IMR-90 (cell line): ENCODE measurements at regions of chr2 and their contacts with region 1.

Region 1: DNA sequence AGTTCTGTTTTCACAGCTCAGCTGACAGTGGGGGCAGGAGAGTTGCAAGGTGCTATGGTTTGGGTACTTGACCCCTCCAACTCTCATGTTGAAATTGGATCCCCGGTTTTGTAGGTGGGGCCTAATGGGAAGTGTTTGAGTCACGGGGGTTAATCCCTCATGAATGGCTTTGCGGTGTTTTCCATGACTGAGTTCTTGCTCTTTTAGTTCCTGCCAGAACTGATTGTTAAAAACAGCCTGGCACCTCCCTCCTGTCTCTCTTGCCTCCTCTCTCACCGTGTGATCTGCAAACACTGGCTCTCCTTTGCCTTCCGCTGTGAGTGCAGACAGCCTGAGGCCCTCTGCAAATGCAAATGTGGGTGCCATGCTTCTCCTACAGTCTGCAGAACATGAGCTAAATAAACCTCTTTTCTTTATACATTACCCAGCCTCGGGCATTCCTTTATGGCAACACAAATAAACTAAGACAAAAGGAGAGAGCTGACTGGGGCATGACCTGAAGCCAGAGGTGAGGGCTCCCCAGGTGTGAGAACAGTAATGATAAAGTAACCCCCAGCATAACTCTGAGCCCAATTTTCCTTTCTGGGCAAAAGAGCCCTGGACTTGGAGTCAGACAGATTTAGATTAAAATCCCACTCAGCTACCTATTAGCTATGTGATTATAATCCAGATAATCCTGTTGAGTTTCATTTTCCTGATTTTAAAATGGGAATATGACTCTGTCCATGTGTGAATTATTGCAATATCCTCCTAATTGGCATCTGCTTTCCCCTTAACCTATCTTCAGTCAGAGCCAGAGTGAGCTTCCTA is 64.9 kb upstream of the CAPN13 start:
- DNase-seq: no peak
- ATAC-seq: no peak
- H3K4me3 ChIP-seq: no peak overlapping the region
- H3K27ac ChIP-seq: no peak overlapping the region
- H3K4me1 ChIP-seq: no peaks in the 10 kb centered on the region
- H3K27me3 ChIP-seq: no peaks in the 10 kb centered on the region
- CTCF ChIP-seq: no peak
- POLR2A ChIP-seq: no peak
- RAD21 ChIP-seq: no peak

Region 2: GRCh38 chr2:30266051-30266621 is 606.0 kb before region 1 on chr2:
- CTCF ChIA-PET with region 1: no interaction called
- POLR2A ChIA-PET with region 1: no interaction called
- dilution Hi-C with region 1: no loop called
- in situ Hi-C with region 1: no loop called
- intact Hi-C with region 1: no loop called
- DNase-seq: no peak
- ATAC-seq: peak; percentile 33
- H3K4me3 ChIP-seq: no peak overlapping the region
- H3K27ac ChIP-seq: peak overlapping the region; percentile 100
- H3K4me1 ChIP-seq: peaks cover 11% of the 10 kb centered on the region
- H3K27me3 ChIP-seq: no peaks in the 10 kb centered on the region
- CTCF ChIP-seq: no peak
- POLR2A ChIP-seq: no peak
- RAD21 ChIP-seq: no peak

Region 3: DNA sequence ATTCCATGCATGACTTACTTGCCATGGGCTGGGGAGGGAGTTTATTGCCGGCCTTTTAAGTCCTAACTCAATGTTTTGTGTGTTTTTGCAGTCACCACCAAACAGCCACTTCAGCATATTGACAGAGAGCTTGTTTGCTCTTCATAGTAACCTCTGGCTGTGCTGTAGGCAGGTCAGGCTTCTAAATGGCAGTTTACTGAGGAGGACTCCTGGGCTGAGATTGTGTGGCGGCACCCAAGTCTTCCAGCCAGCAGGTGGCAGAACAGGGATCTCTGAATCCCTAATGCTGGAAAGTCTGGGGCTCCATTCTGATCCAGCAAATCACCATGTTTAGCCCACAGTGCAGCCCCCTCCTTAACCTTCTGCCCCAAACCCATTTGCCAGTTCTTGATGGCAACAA is 186.2 kb before region 1 on chr2:
- CTCF ChIA-PET with region 1: no interaction called
- POLR2A ChIA-PET with region 1: no interaction called
- dilution Hi-C with region 1: no loop called
- in situ Hi-C with region 1: no loop called
- intact Hi-C with region 1: no loop called
- DNase-seq: no peak
- ATAC-seq: no peak
- H3K4me3 ChIP-seq: no peak overlapping the region
- H3K27ac ChIP-seq: no peak overlapping the region
- H3K4me1 ChIP-seq: peaks cover 4% of the 10 kb centered on the region; the same call in 1 of the 2 replicates
- H3K27me3 ChIP-seq: no peaks in the 10 kb centered on the region
- CTCF ChIP-seq: no peak; the same call in 1 of the 2 replicates
- POLR2A ChIP-seq: no peak
- RAD21 ChIP-seq: no peak

Region 4: GRCh38 chr2:30736461-30737325 is 135.5 kb before region 1 on chr2:
- CTCF ChIA-PET with region 1: no interaction called
- POLR2A ChIA-PET with region 1: no interaction called
- dilution Hi-C with region 1: no loop called
- in situ Hi-C with region 1: no loop called
- intact Hi-C with region 1: loop called (anchors 5 kb)
- DNase-seq: no peak
- ATAC-seq: no peak
- H3K4me3 ChIP-seq: no peak overlapping the region
- H3K27ac ChIP-seq: no peak overlapping the region
- H3K4me1 ChIP-seq: no peaks in the 10 kb centered on the region
- H3K27me3 ChIP-seq: peaks cover 31% of the 10 kb centered on the region
- CTCF ChIP-seq: no peak
- POLR2A ChIP-seq: no peak
- RAD21 ChIP-seq: no peak

Region 5: GRCh38 chr2:30915486-30915885 is 43.3 kb after region 1 on chr2:
- CTCF ChIA-PET with region 1: no interaction called
- POLR2A ChIA-PET with region 1: no interaction called
- dilution Hi-C with region 1: no loop called
- in situ Hi-C with region 1: no loop called
- intact Hi-C with region 1: no loop called
- DNase-seq: peak; percentile 0
- ATAC-seq: no peak
- H3K4me3 ChIP-seq: no peak overlapping the region
- H3K27ac ChIP-seq: no peak overlapping the region
- H3K4me1 ChIP-seq: no peaks in the 10 kb centered on the region
- H3K27me3 ChIP-seq: no peaks in the 10 kb centered on the region; the same call in 1 of the 2 replicates
- CTCF ChIP-seq: peak; percentile 17; the same call in 1 of the 2 replicates
- POLR2A ChIP-seq: no peak
- RAD21 ChIP-seq: no peak